ENCODE measurements at regions of chr18 and their contacts with region 1.

Region 1: GRCh38 chr18:11995445-11996189 is 14.3 kb downstream of the IMPA2 start:
- DNase-seq: peak; percentile 82
- H3K4me3 ChIP-seq: no peak overlapping the region
- H3K27ac ChIP-seq: no peak overlapping the region
- H3K4me1 ChIP-seq: peaks cover 6% of the 10 kb centered on the region
- H3K27me3 ChIP-seq: no peaks in the 10 kb centered on the region
- CTCF ChIP-seq: peak; percentile 78 to 80
- POLR2A ChIP-seq: no peak

Region 2: GRCh38 chr18:11654736-11655605 is 340.6 kb before region 1 on chr18:
- CTCF ChIA-PET with region 1: interaction called, 27 read pairs
- POLR2A ChIA-PET with region 1: no interaction called
- dilution Hi-C with region 1: no loop called
- intact Hi-C with region 1: loop called (anchors 1 kb)
- DNase-seq: peak; percentile 32
- H3K4me3 ChIP-seq: no peak overlapping the region
- H3K27ac ChIP-seq: no peak overlapping the region
- H3K4me1 ChIP-seq: no peaks in the 10 kb centered on the region
- H3K27me3 ChIP-seq: peaks cover 0 to 2% of the 10 kb centered on the region in 2 experiments
- CTCF ChIP-seq: peak; percentile 80 to 84
- POLR2A ChIP-seq: no peak

Region 3: GRCh38 chr18:11851146-11851805 is 144.3 kb before region 1 on chr18 and contains the start of gene CHMP1B:
- CTCF ChIA-PET with region 1: interaction called, 4 read pairs
- POLR2A ChIA-PET with region 1: no interaction called
- dilution Hi-C with region 1: no loop called
- intact Hi-C with region 1: loop called (anchors 5 kb)
- DNase-seq: peak; percentile 98
- H3K4me3 ChIP-seq: peak within 1 kb of the TSS; percentile 42 to 94 (median 86)
- H3K27ac ChIP-seq: peak within 1 kb of the TSS; percentile 89
- H3K4me1 ChIP-seq: peaks cover 21% of the 10 kb centered on the region
- H3K27me3 ChIP-seq: peaks cover 2 to 5% of the 10 kb centered on the region in 2 experiments
- CTCF ChIP-seq: no peak
- POLR2A ChIP-seq: peak; percentile 95
- total RNA-seq, gene CHMP1B: 27.0 and 27.2 TPM in 2 replicates

Region 4: DNA sequence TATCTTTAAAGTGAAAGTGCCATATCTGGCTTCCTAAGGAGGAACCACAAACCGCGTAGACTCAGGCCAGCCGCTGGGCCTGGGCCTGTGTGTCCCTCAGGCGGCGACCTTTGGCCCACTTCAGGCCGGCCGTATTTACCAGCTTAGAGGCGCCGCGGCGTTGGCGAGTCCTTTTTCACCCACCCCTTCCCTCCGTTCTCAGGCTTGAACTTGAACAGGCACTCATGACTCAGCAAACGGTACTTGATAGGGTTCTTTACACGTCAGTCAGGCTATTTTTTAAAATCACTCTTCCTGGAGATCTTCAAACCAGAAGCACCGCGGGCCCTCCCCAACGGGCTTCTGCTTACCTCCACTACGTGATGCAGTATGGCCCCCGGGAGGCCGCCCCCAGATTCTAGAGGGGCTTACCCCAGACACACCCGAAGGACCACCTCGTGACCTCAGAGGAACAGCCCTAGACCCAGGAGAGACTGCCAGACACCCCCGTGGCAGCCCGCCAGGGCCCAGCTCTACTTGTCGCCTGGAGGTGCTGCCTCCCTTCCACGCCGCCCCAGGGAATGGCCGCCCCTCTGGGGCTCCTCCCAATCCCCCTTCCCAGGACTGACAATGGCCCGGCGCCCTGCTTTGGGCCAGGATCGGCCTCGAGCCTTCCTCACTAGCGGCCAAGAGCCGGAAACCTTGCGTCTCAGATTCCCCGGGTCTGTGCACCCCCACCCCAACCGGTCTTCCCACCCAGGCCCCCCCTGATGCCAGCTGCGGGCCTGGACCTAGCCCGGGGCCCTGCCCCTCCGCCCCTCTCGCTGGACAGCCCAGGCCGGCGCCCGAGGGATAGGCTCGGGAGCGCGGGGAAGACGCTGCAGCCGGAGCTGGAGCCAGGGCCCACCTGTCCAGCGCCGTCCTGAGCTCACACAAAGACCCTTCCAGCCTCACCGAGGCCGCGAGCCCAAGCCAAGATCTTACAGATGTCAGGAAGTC is 48.1 kb before region 1 on chr18:
- CTCF ChIA-PET with region 1: interaction called, 717 read pairs
- POLR2A ChIA-PET with region 1: no interaction called
- dilution Hi-C with region 1: no loop called
- intact Hi-C with region 1: loop called (anchors 2 kb)
- DNase-seq: peak; percentile 97
- H3K4me3 ChIP-seq: peak overlapping the region; percentile 43 to 60 (median 57)
- H3K27ac ChIP-seq: peak overlapping the region; percentile 95
- H3K4me1 ChIP-seq: peaks cover 11% of the 10 kb centered on the region
- H3K27me3 ChIP-seq: no peaks in the 10 kb centered on the region
- CTCF ChIP-seq: no peak
- POLR2A ChIP-seq: peak; percentile 27

Region 5: GRCh38 chr18:11980555-11981382 is 14.8 kb before region 1 on chr18:
- CTCF ChIA-PET with region 1: interaction called, 72 read pairs
- POLR2A ChIA-PET with region 1: interaction called, 5 read pairs
- dilution Hi-C with region 1: no loop called
- intact Hi-C with region 1: no loop called
- DNase-seq: peak; percentile 98
- H3K4me3 ChIP-seq: peak overlapping the region; percentile 43 to 86 (median 72)
- H3K27ac ChIP-seq: peak overlapping the region; percentile 71
- H3K4me1 ChIP-seq: peaks cover 12% of the 10 kb centered on the region
- H3K27me3 ChIP-seq: peaks cover 3 to 4% of the 10 kb centered on the region in 2 experiments
- CTCF ChIP-seq: peak in 1 of 2 donors; percentile 19
- POLR2A ChIP-seq: peak; percentile 61

Region 6: DNA sequence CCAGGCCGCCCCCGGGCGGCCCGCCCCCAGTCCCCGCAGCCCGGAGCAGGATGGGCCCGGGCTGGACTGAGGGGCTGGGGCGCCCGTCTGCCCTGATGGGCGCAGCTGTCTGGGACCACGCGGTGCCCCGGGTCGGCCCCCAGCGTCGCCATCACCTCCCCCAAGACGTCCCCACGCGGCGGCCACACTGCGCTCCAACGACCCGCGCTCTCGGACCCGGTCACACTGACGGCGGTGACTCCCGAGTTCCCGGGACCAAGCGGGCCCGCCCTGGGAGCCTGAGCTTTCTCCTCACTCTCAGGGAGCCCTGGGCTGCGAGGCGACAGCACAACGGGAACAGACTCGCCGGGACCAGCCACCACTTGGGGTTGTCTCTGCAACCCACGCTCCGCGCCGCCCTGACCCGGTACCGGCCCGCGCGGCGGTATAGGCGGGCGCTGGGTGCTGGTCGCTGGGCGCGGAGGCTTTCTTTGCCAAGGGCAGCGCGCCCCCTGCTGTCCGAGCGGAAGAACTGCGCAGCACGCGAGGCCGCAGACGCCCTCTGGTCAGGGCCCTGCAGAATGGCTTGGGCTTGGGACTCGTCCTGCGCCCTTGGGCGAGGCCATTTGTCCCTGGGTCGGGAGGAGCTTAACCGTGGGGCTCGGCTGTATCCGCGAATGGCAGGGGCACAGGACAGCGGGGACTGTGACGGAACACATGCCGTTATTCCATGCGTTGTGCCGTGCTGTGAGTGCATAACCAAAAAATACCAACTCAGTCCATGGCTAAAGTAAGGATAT is 43.2 kb after region 1 on chr18:
- CTCF ChIA-PET with region 1: interaction called, 43 read pairs
- POLR2A ChIA-PET with region 1: no interaction called
- dilution Hi-C with region 1: no loop called
- intact Hi-C with region 1: loop called (anchors 2 kb)
- DNase-seq: peak; percentile 70
- H3K4me3 ChIP-seq: peak overlapping the region in 2 of 3 experiments; percentile 52 to 57
- H3K27ac ChIP-seq: no peak overlapping the region
- H3K4me1 ChIP-seq: peaks cover 2% of the 10 kb centered on the region
- H3K27me3 ChIP-seq: peaks cover 5 to 7% of the 10 kb centered on the region in 2 experiments
- CTCF ChIP-seq: peak; percentile 97 to 99
- POLR2A ChIP-seq: no peak

Region 7: GRCh38 chr18:12049978-12050811 is 54.6 kb after region 1 on chr18:
- CTCF ChIA-PET with region 1: no interaction called
- POLR2A ChIA-PET with region 1: no interaction called
- dilution Hi-C with region 1: no loop called
- intact Hi-C with region 1: no loop called
- DNase-seq: no peak
- H3K4me3 ChIP-seq: no peak overlapping the region
- H3K27ac ChIP-seq: no peak overlapping the region
- H3K4me1 ChIP-seq: no peaks in the 10 kb centered on the region
- H3K27me3 ChIP-seq: peaks cover 6 to 15% of the 10 kb centered on the region in 2 experiments
- CTCF ChIP-seq: no peak
- POLR2A ChIP-seq: no peak

Measured in endothelial cell of umbilical vein (primary cell).